ENCODE measurements at regions of chr6 and their contacts with region 1.

Region 1: DNA sequence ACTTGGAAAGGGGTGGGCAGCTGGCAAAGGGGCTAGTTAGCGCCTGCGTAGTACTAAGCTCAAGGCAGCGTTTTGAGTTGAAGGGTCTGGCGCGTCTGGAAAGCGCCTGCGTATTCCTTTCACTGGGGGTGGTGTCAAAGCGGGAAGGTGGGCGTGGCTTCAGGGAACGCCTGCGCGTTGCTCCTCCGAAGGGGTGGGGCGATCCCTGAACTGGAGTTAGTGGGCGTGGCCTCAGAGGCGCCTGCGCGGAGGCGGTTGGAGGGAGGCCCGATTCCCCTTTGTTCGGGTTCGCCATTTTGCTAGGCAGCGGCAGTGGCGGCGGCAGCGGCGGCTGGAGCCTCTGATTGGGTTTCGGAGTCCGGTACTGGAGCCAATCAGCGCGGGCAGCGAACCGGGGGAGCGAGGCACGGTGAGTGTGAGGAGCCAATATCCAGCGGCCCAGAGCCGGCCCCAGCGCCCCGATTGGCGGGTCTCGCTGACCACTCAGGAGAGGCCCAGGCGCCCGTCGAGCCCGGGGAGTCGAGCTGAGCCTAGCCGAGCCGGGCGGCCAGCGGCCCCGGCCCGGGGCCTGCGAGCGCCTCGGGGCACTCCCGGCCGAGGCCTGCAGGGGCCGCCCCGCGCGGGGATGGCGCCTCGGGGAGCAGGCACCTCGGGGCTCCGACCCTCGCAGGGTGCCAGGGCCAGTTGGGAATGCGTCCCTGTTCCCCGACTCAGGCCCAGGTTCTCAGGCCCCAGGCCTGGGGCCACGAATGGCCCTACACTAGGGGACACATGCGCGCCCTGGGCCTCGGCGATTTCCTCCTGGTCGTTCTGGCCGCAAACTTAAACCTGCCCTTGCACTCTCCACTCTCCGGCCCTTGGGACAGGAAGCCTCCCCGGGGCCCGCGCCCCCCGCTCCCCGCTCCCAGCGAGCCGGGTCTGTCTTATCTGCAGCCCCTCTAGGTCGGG is at the start of gene NFYA:
- DNase-seq: peak; percentile 99
- H3K4me3 Mint-ChIP-seq: peak within 1 kb of the TSS; percentile 85
- H3K27ac Mint-ChIP-seq: peak within 1 kb of the TSS; percentile 95
- H3K4me1 Mint-ChIP-seq: peaks cover 33% of the 10 kb centered on the region
- H3K27me3 Mint-ChIP-seq: no peaks in the 10 kb centered on the region
- CTCF ChIP-seq: peak; percentile 23
- total RNA-seq, gene NFYA: 41.5 and 42.1 TPM in 2 replicates

Region 2: DNA sequence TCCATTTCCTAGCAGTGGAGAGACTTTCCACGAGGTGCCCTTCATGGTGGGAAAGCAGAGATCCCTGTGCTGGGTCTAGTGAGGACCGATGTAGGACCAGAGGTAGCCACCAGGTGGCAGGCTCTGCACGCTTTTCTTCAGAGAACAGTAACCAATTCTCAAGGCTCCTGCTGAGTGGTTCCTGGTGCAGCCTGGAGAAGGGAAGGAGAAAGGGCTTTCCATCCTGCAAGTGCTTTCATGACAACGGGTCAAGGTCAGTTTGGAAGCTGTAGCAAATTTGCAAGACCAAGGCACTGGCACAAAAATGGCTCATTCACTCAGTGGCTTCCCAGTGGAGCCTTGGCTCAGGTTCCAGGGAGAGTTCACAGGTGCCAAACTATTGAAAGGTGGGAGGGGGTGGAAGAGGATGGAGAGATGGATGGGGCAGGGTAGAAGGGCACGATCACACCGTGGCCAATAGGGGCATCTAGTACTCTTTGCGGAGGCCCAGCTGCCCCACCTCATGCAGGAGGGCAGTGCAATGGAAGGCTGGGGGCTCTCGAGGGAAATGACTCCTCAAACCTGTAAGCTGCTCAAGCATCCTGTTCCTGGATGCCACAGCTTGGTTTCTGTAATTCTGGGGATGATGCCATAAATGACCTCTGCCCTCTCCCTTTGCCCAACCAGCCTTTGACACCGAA is 1724.9 kb before region 1 on chr6:
- CTCF ChIA-PET with region 1: interaction called, 4 read pairs
- POLR2A ChIA-PET with region 1: no interaction called
- intact Hi-C with region 1: loop called (anchors 5 kb)
- DNase-seq: peak; percentile 62
- H3K4me3 Mint-ChIP-seq: no peak overlapping the region
- H3K27ac Mint-ChIP-seq: no peak overlapping the region
- H3K4me1 Mint-ChIP-seq: no peaks in the 10 kb centered on the region
- H3K27me3 Mint-ChIP-seq: no peaks in the 10 kb centered on the region
- CTCF ChIP-seq: peak; percentile 91

Region 3: GRCh38 chr6:40947876-40948526 is 124.9 kb before region 1 on chr6:
- CTCF ChIA-PET with region 1: no interaction called
- POLR2A ChIA-PET with region 1: no interaction called
- intact Hi-C with region 1: no loop called
- DNase-seq: peak; percentile 34
- H3K4me3 Mint-ChIP-seq: no peak overlapping the region
- H3K27ac Mint-ChIP-seq: no peak overlapping the region
- H3K4me1 Mint-ChIP-seq: peaks cover 26% of the 10 kb centered on the region
- H3K27me3 Mint-ChIP-seq: no peaks in the 10 kb centered on the region
- CTCF ChIP-seq: no peak

Region 4: GRCh38 chr6:41182069-41183034 is 109.4 kb after region 1 on chr6:
- CTCF ChIA-PET with region 1: no interaction called
- POLR2A ChIA-PET with region 1: no interaction called
- intact Hi-C with region 1: loop called (anchors 5 kb)
- DNase-seq: peak; percentile 70
- H3K4me3 Mint-ChIP-seq: no peak overlapping the region
- H3K27ac Mint-ChIP-seq: no peak overlapping the region
- H3K4me1 Mint-ChIP-seq: no peaks in the 10 kb centered on the region
- H3K27me3 Mint-ChIP-seq: peaks cover 17% of the 10 kb centered on the region
- CTCF ChIP-seq: peak; percentile 56

Measured in MCF 10A (cell line).